ENCODE measurements at regions of chr20 and their contacts with region 1.

Region 1: GRCh38 chr20:48620519-48621254 is 207.1 kb downstream of the PREX1 start:
- DNase-seq: peak; percentile 85
- H3K4me3 ChIP-seq: peak overlapping the region in 1 of 3 experiments; percentile 43
- H3K27ac ChIP-seq: peak overlapping the region; percentile 42
- H3K4me1 ChIP-seq: peaks cover 12% of the 10 kb centered on the region
- H3K27me3 ChIP-seq: no peaks in the 10 kb centered on the region
- CTCF ChIP-seq: peak; percentile 83 to 95
- POLR2A ChIP-seq: no peak

Region 2: GRCh38 chr20:46752728-46753127 is 1868.0 kb before region 1 on chr20:
- CTCF ChIA-PET with region 1: interaction called, 13 read pairs
- POLR2A ChIA-PET with region 1: no interaction called
- dilution Hi-C with region 1: no loop called
- intact Hi-C with region 1: no loop called
- DNase-seq: peak; percentile 62
- H3K4me3 ChIP-seq: no peak overlapping the region
- H3K27ac ChIP-seq: no peak overlapping the region
- H3K4me1 ChIP-seq: no peaks in the 10 kb centered on the region
- H3K27me3 ChIP-seq: peaks cover 0 to under 1% of the 10 kb centered on the region in 2 experiments
- CTCF ChIP-seq: peak; percentile 57 to 61
- POLR2A ChIP-seq: no peak

Region 3: GRCh38 chr20:47648943-47649342 is 971.7 kb before region 1 on chr20:
- CTCF ChIA-PET with region 1: interaction called, 11 read pairs
- POLR2A ChIA-PET with region 1: no interaction called
- dilution Hi-C with region 1: no loop called
- intact Hi-C with region 1: no loop called
- DNase-seq: no peak
- H3K4me3 ChIP-seq: no peak overlapping the region
- H3K27ac ChIP-seq: no peak overlapping the region
- H3K4me1 ChIP-seq: peaks cover 17% of the 10 kb centered on the region
- H3K27me3 ChIP-seq: no peaks in the 10 kb centered on the region
- CTCF ChIP-seq: no peak
- POLR2A ChIP-seq: no peak

Region 4: DNA sequence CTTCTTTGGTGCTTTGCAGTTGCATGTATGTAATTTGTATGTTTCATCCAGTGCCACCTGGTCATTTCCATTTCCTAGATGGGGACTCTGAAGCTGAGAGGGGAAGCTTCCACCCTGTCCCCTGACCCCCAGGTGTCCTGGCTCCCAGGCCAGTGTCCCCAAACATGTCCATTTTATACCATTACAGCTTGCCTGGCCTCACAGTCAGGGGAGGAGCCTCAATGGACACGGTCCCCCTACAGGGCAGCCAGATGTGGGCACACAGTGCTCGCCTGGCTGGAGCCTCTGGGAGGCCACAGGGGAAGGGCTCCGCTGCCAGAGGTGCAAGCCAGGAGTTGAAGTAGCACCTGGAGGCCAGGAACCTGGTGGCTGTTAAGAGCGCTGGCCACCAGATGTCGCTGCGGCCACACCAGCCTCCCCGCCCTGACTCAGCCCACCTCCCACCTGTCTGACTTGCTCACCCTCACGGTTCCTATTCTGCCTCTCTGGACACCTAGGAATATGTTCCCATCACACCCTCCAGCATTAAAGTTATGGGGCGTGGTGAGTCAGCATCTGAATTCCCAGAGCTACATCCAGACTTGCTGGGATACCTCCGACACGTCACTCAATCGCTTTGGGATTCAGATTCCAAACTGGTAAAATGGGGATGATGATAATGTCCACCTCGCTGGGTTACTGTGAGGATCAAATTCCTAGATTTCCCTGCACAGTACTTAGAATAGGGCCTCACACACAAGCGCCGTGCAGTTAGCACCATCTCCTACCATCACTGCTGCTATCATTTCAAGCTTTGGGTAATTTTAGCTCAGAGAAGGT is 942.8 kb before region 1 on chr20:
- CTCF ChIA-PET with region 1: interaction called, 302 read pairs
- POLR2A ChIA-PET with region 1: no interaction called
- dilution Hi-C with region 1: no loop called
- intact Hi-C with region 1: loop called (anchors 1 kb)
- DNase-seq: peak; percentile 43
- H3K4me3 ChIP-seq: no peak overlapping the region
- H3K27ac ChIP-seq: no peak overlapping the region
- H3K4me1 ChIP-seq: no peaks in the 10 kb centered on the region
- H3K27me3 ChIP-seq: no peaks in the 10 kb centered on the region
- CTCF ChIP-seq: peak; percentile 75 to 92
- POLR2A ChIP-seq: no peak

Region 5: DNA sequence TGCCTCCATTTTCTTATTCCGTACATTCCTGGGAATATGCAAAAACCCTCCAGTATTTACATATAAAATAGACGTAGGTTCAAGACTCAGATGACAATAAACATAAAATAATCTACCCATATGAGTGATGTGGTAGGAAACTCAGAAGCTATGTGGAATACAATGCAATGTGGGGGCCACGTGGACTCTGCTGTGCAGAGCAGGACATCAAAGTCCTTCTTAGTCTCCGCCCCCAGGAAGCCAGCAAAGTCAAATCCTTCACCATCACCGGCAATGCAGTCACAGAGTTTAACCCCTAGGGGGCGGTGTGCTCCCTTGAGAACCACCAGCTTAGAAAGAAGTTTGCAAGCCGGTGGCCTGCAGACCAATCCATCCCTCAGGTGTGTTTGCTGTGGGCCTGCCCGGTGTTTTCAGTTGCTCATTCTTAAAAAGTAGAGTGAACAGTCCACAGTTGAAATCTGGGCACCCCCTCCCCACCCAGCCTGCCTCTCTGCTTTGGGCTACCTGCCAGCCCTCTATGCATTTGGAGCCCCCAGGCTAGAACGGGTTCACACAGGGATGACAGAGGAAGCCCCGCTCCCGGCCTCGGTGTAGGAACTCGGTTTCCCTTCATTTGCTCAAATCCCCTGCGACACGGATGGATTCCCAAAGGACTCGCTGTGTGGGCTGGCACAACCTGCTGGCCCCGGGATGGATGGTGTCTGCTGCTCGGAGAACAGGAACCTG is 895.3 kb before region 1 on chr20:
- CTCF ChIA-PET with region 1: interaction called, 122 read pairs
- POLR2A ChIA-PET with region 1: no interaction called
- dilution Hi-C with region 1: no loop called
- intact Hi-C with region 1: loop called (anchors 1 kb)
- DNase-seq: peak; percentile 90
- H3K4me3 ChIP-seq: no peak overlapping the region
- H3K27ac ChIP-seq: no peak overlapping the region
- H3K4me1 ChIP-seq: no peaks in the 10 kb centered on the region
- H3K27me3 ChIP-seq: no peaks in the 10 kb centered on the region
- CTCF ChIP-seq: peak; percentile 90 to 91
- POLR2A ChIP-seq: no peak

Region 6: GRCh38 chr20:47878040-47878439 is 742.6 kb before region 1 on chr20:
- CTCF ChIA-PET with region 1: interaction called, 4 read pairs
- POLR2A ChIA-PET with region 1: no interaction called
- dilution Hi-C with region 1: no loop called
- intact Hi-C with region 1: loop called (anchors 1 kb)
- DNase-seq: no peak
- H3K4me3 ChIP-seq: no peak overlapping the region
- H3K27ac ChIP-seq: peak overlapping the region; percentile 84
- H3K4me1 ChIP-seq: peaks cover 47% of the 10 kb centered on the region
- H3K27me3 ChIP-seq: no peaks in the 10 kb centered on the region
- CTCF ChIP-seq: peak in 1 of 2 donors; percentile 33
- POLR2A ChIP-seq: no peak

Region 7: GRCh38 chr20:48606841-48607543 is 13.7 kb before region 1 on chr20:
- CTCF ChIA-PET with region 1: interaction called, 12 read pairs
- POLR2A ChIA-PET with region 1: no interaction called
- dilution Hi-C with region 1: no loop called
- intact Hi-C with region 1: no loop called
- DNase-seq: no peak
- H3K4me3 ChIP-seq: no peak overlapping the region
- H3K27ac ChIP-seq: no peak overlapping the region
- H3K4me1 ChIP-seq: no peaks in the 10 kb centered on the region
- H3K27me3 ChIP-seq: peaks cover 0 to 2% of the 10 kb centered on the region in 2 experiments
- CTCF ChIP-seq: no peak
- POLR2A ChIP-seq: no peak

Region 8: GRCh38 chr20:48711693-48712456 is 91.2 kb after region 1 on chr20:
- CTCF ChIA-PET with region 1: no interaction called
- POLR2A ChIA-PET with region 1: no interaction called
- dilution Hi-C with region 1: no loop called
- intact Hi-C with region 1: no loop called
- DNase-seq: no peak
- H3K4me3 ChIP-seq: no peak overlapping the region
- H3K27ac ChIP-seq: no peak overlapping the region
- H3K4me1 ChIP-seq: no peaks in the 10 kb centered on the region
- H3K27me3 ChIP-seq: no peaks in the 10 kb centered on the region
- CTCF ChIP-seq: no peak
- POLR2A ChIP-seq: no peak

Measured in endothelial cell of umbilical vein (primary cell).